Lower leg skin (tissue), 4 donors: ENCODE measurements at regions of chr3 and their contacts with region 1.

Region 1: GRCh38 chr3:50542177-50543034 is 25.1 kb downstream of the C3orf18 start:
- DNase-seq: peak; percentile 63 to 93
- H3K4me3 ChIP-seq: no peak overlapping the region
- CTCF ChIP-seq: peak in 1 of 3 donors; percentile 42
- POLR2A ChIP-seq: no peak

Region 2: GRCh38 chr3:50347194-50347918 is 195.1 kb before region 1 on chr3:
- intact Hi-C with region 1: loop called (anchors 5 kb)
- DNase-seq: no peak
- H3K4me3 ChIP-seq: no peak overlapping the region
- CTCF ChIP-seq: no peak
- POLR2A ChIP-seq: no peak

Region 3: GRCh38 chr3:50436114-50436674 is 106.2 kb before region 1 on chr3:
- intact Hi-C with region 1: loop called (anchors 10 kb)
- DNase-seq: peak; percentile 32 to 89
- H3K4me3 ChIP-seq: no peak overlapping the region
- CTCF ChIP-seq: peak in 1 of 3 donors; percentile 56
- POLR2A ChIP-seq: no peak

Region 4: GRCh38 chr3:50466177-50466576 is 76.2 kb before region 1 on chr3:
- intact Hi-C with region 1: no loop called
- DNase-seq: no peak
- H3K4me3 ChIP-seq: no peak overlapping the region
- CTCF ChIP-seq: no peak
- POLR2A ChIP-seq: no peak